ENCODE measurements at regions of chr9 and their contacts with region 1.

Region 1: DNA sequence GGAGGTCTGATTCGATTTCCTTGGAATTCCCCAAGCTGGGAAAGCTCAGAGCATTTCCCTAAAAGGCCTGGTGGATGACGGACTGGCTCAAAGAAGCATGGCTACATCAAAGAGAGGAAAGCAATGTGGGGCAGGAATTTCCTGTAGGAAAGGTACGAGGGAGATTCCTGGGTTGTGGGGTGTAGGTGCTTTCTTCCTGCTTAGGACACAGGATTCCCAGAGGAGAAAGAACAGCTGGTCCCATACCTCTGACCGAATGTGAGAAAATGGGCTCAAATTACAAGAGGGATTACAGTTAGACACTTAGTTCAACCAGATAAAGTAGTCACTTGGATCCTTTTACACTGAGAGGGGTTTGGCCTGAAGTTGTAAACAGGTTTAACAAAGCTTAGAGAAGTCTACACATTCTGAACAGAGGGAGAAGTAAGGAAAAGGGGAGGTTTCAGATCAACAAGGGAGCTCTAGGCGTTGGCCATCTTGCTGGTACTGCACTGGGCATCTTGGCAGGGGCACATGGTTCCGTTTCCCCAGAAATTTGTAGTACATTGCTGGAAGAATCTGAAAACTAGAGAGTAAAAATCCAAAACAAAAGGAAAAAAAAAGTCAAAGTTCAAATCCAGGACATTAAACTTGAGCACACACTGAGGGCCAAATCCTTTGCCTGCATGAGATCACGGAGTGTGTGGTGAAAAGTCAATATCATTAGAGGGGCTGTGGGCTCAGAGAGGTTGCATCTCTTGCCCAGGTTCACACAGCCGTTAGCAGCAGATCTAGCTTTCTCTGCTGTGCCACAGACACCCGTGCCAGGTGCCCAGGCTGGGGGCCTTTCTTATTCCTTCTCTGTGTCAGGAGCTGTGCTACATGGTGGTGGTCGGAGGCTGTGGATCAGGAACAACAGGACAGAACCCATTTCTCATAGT is 171.3 kb downstream of the RGS3 start:
- DNase-seq: peak in 1 of 5 donors; percentile 14
- ATAC-seq: peak in 2 of 4 donors; percentile 9 to 19
- H3K4me3 ChIP-seq: no peak overlapping the region
- H3K27ac ChIP-seq: peak overlapping the region in 3 of 12 donors; percentile 5 to 31 (median 6)
- H3K4me1 ChIP-seq: peaks cover 0 to 43% (median 19%) of the 10 kb centered on the region in 12 donors
- H3K27me3 ChIP-seq: no peaks in the 10 kb centered on the region
- CTCF ChIP-seq: no peak
- POLR2A ChIP-seq: no peak

Region 2: GRCh38 chr9:113274474-113275156 is 360.2 kb before region 1 on chr9:
- intact Hi-C with region 1: no loop called
- DNase-seq: no peak
- ATAC-seq: peak in 3 of 4 donors; percentile 17 to 44 (median 40)
- H3K4me3 ChIP-seq: peak overlapping the region; percentile 48 to 93 (median 76)
- H3K27ac ChIP-seq: peak overlapping the region; percentile 36 to 96 (median 94)
- H3K4me1 ChIP-seq: peaks cover 4 to 41% (median 19%) of the 10 kb centered on the region in 12 donors
- H3K27me3 ChIP-seq: no peaks in the 10 kb centered on the region
- CTCF ChIP-seq: peak; percentile 55 to 75 (median 66)
- POLR2A ChIP-seq: no peak

Region 3: GRCh38 chr9:113614843-113615648 is 19.8 kb before region 1 on chr9:
- intact Hi-C with region 1: loop called in 1 of 10 experiments (anchors 2 kb)
- DNase-seq: peak; percentile 66 to 77 (median 74)
- ATAC-seq: peak; percentile 32 to 78 (median 69)
- H3K4me3 ChIP-seq: peak overlapping the region in 1 of 12 donors; percentile 15
- H3K27ac ChIP-seq: peak overlapping the region; percentile 17 to 93 (median 70)
- H3K4me1 ChIP-seq: peaks cover 12 to 91% (median 57%) of the 10 kb centered on the region in 12 donors
- H3K27me3 ChIP-seq: no peaks in the 10 kb centered on the region
- CTCF ChIP-seq: no peak
- POLR2A ChIP-seq: no peak

Measured in heart left ventricle (tissue), 16 donors.